ENCODE measurements at regions of chr17 and their contacts with region 1.

Region 1: GRCh38 chr17:37373530-37374159 is 2.1 kb upstream of the C17orf78 start:
- DNase-seq: peak; percentile 80
- H3K4me3 ChIP-seq: no peak overlapping the region
- H3K27ac ChIP-seq: no peak overlapping the region
- H3K4me1 ChIP-seq: no peaks in the 10 kb centered on the region
- CTCF ChIP-seq: peak; percentile 99

Region 2: GRCh38 chr17:37239690-37240334 is 133.8 kb before region 1 on chr17:
- CTCF ChIA-PET with region 1: no interaction called
- POLR2A ChIA-PET with region 1: no interaction called
- intact Hi-C with region 1: loop called (anchors 10 kb)
- DNase-seq: peak; percentile 39
- H3K4me3 ChIP-seq: no peak overlapping the region
- H3K27ac ChIP-seq: no peak overlapping the region
- H3K4me1 ChIP-seq: no peaks in the 10 kb centered on the region
- CTCF ChIP-seq: peak; percentile 90

Region 3: DNA sequence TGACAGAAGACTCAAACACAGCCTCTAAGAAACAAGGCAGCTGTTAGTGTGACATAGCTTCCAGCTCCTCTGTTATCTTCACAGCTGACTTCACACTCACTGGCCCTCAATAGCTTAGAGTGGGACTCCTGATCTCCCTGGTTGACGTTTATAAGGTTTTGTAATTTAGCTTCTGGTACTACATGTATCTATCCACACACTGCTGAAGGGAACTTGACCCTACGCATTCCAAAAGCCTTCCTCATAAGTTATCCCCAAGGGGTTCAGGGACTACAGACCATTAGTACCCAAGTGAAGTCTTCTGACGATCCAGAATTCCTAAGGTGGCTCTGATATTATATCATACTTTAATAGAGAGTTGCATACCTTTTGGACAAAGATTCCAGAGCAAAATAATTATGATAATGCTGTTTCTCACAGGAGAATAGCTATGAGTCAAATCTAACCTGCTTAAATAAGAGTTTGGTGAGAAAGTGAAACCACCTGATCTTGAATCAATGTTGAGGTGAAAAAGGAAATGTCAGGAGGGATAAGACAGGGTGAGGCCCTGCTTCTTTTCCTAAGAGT is 18.5 kb after region 1 on chr17:
- CTCF ChIA-PET with region 1: no interaction called
- POLR2A ChIA-PET with region 1: no interaction called
- intact Hi-C with region 1: loop called (anchors 1 kb)
- DNase-seq: no peak
- H3K4me3 ChIP-seq: no peak overlapping the region
- H3K27ac ChIP-seq: no peak overlapping the region
- H3K4me1 ChIP-seq: no peaks in the 10 kb centered on the region
- CTCF ChIP-seq: no peak

Measured in OCI-LY7 (cell line).